ENCODE measurements at regions of chr3 and their contacts with region 1.

Region 1: GRCh38 chr3:132416807-132417694 is at the start of gene DNAJC13:
- DNase-seq: peak; percentile 94
- H3K4me3 Mint-ChIP-seq: peak within 1 kb of the TSS; percentile 95
- H3K27ac Mint-ChIP-seq: peak within 1 kb of the TSS; percentile 83
- H3K4me1 Mint-ChIP-seq: peaks cover 10% of the 10 kb centered on the region
- H3K27me3 Mint-ChIP-seq: no peaks in the 10 kb centered on the region
- CTCF ChIP-seq: no peak
- total RNA-seq, gene DNAJC13: 33.0 TPM in 2 replicates

Region 2: GRCh38 chr3:132405188-132405587 is 11.9 kb before region 1 on chr3:
- CTCF ChIA-PET with region 1: interaction called, 5 read pairs
- POLR2A ChIA-PET with region 1: interaction called, 18 read pairs
- intact Hi-C with region 1: no loop called
- DNase-seq: no peak
- H3K4me3 Mint-ChIP-seq: no peak overlapping the region
- H3K27ac Mint-ChIP-seq: no peak overlapping the region
- H3K4me1 Mint-ChIP-seq: no peaks in the 10 kb centered on the region
- H3K27me3 Mint-ChIP-seq: no peaks in the 10 kb centered on the region
- CTCF ChIP-seq: no peak

Region 3: GRCh38 chr3:132432639-132433038 is 15.6 kb after region 1 on chr3:
- CTCF ChIA-PET with region 1: interaction called, 3 read pairs
- POLR2A ChIA-PET with region 1: interaction called, 23 read pairs
- intact Hi-C with region 1: no loop called
- DNase-seq: peak; percentile 73
- H3K4me3 Mint-ChIP-seq: no peak overlapping the region
- H3K27ac Mint-ChIP-seq: peak overlapping the region; percentile 75
- H3K4me1 Mint-ChIP-seq: peaks cover 18% of the 10 kb centered on the region
- H3K27me3 Mint-ChIP-seq: no peaks in the 10 kb centered on the region
- CTCF ChIP-seq: no peak

Region 4: GRCh38 chr3:132445817-132446216 is 28.8 kb after region 1 on chr3:
- CTCF ChIA-PET with region 1: interaction called, 4 read pairs
- POLR2A ChIA-PET with region 1: interaction called, 37 read pairs
- intact Hi-C with region 1: loop called (anchors 1 kb)
- DNase-seq: peak; percentile 92
- H3K4me3 Mint-ChIP-seq: peak overlapping the region; percentile 12
- H3K27ac Mint-ChIP-seq: peak overlapping the region; percentile 46
- H3K4me1 Mint-ChIP-seq: peaks cover 15% of the 10 kb centered on the region
- H3K27me3 Mint-ChIP-seq: no peaks in the 10 kb centered on the region
- CTCF ChIP-seq: no peak

Region 5: GRCh38 chr3:132659365-132660051 is 242.5 kb after region 1 on chr3 and contains the start of gene ACAD11:
- CTCF ChIA-PET with region 1: no interaction called
- POLR2A ChIA-PET with region 1: interaction called, 14 read pairs
- intact Hi-C with region 1: no loop called
- DNase-seq: peak; percentile 72
- H3K4me3 Mint-ChIP-seq: peak within 1 kb of the TSS; percentile 89
- H3K27ac Mint-ChIP-seq: peak within 1 kb of the TSS; percentile 99
- H3K4me1 Mint-ChIP-seq: peaks cover 26% of the 10 kb centered on the region
- H3K27me3 Mint-ChIP-seq: no peaks in the 10 kb centered on the region
- CTCF ChIP-seq: peak; percentile 45
- total RNA-seq, gene ACAD11: 30.9 and 31.9 TPM in 2 replicates

Measured in MCF 10A (cell line).